Lower leg skin (tissue), 4 donors: ENCODE measurements at regions of chr11 and their contacts with region 1.

Region 1: GRCh38 chr11:102494216-102494615 is 36.3 kb downstream of the MMP7 start:
- DNase-seq: no peak
- H3K4me3 ChIP-seq: no peak overlapping the region
- CTCF ChIP-seq: no peak
- POLR2A ChIP-seq: no peak

Region 2: DNA sequence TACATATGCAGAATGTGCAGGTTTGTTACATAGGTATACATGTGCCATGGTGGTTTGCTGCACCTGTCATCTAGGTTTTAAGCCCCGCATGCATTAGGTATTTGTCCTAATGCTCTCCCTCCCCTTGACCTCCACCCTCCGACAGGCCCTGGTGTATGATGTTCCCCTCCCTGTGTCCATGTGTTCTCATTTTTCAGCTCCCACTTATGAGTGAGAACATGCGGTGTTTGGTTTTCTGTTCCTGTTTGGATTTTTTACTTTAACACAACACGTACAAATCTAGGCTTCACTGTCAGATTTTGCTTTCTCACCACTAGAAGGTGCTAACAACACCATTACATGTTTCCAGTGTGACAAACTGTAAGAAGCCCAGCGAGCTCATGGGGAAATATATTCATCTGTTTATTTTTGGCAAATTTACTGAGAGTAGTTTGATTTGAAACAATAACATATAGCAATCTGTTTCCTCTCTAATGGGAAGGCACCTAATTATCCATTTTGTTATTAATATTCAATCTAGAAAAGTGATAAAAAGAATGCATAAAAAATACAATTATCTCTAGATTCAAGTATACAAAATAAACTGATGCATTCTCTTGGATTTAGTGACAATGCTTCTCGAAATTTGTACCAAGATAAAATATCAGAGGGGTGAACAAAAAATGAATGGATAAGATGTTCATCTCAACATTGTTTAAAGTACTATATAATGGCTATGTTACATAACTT is 200.2 kb before region 1 on chr11:
- intact Hi-C with region 1: loop called (anchors 5 kb)
- DNase-seq: no peak
- H3K4me3 ChIP-seq: no peak overlapping the region
- CTCF ChIP-seq: no peak
- POLR2A ChIP-seq: no peak

Region 3: DNA sequence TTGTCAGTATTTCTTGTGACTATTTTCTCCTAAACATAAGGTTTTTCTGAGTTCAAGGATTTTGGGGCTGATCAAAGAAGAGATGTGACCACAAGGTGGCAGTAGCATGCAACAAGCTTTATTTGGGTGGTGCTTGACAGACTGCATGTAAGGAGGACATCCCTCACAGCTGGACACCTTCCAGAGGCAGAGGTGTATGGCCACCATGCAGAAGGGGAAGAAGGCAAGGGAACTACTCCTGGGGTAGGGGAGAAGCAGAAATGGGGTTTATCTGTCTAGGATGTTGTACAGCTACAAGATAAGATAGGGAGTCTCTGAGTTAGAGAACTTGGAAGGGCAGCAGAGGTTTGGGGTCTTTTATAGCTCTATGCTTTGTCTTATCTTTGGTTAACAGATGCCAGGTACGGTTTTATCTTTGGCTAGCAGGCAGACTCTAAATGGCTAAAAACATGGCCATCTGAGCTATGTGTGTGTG is 152.3 kb before region 1 on chr11:
- intact Hi-C with region 1: loop called (anchors 5 kb)
- DNase-seq: peak; percentile 87 to 89
- H3K4me3 ChIP-seq: no peak overlapping the region
- CTCF ChIP-seq: peak in 1 of 3 donors; percentile 72
- POLR2A ChIP-seq: no peak

Region 4: DNA sequence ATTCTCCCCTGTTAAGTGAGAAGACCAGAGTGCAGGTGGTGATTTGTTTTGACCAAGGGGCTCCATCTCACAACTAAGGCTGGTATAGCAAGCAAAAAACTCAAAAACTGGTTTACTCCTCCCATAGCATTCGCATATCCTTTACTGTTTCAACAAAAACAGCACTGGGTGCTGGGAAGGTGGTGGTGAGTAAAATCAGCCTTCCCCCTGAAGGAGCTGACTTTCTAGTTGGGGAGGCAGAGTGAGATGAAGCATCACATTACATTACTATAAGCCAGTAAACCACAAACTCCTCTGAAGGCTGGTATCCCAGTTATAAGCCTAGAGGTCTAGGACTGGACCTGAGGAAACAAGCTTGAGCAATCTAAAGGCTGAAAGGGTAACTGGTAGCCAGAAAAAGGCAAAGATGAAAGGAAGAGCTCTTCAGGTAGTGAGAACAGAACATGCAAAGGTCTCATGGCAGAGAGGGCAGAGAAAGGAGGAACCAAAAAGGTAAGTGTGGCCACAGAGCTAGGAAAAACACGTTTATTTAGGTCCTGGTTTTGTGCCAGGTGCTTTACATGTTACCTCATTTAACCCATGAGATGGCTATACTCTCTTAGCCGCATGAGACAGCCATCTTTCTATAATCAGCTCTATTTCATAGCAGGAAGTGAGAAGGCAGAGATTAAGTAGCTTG is 63.9 kb before region 1 on chr11:
- intact Hi-C with region 1: no loop called
- DNase-seq: no peak
- H3K4me3 ChIP-seq: no peak overlapping the region
- CTCF ChIP-seq: no peak
- POLR2A ChIP-seq: no peak